Sigmoid colon (tissue), 7 donors: ENCODE measurements at regions of chr18 and their contacts with region 1.

Region 1: DNA sequence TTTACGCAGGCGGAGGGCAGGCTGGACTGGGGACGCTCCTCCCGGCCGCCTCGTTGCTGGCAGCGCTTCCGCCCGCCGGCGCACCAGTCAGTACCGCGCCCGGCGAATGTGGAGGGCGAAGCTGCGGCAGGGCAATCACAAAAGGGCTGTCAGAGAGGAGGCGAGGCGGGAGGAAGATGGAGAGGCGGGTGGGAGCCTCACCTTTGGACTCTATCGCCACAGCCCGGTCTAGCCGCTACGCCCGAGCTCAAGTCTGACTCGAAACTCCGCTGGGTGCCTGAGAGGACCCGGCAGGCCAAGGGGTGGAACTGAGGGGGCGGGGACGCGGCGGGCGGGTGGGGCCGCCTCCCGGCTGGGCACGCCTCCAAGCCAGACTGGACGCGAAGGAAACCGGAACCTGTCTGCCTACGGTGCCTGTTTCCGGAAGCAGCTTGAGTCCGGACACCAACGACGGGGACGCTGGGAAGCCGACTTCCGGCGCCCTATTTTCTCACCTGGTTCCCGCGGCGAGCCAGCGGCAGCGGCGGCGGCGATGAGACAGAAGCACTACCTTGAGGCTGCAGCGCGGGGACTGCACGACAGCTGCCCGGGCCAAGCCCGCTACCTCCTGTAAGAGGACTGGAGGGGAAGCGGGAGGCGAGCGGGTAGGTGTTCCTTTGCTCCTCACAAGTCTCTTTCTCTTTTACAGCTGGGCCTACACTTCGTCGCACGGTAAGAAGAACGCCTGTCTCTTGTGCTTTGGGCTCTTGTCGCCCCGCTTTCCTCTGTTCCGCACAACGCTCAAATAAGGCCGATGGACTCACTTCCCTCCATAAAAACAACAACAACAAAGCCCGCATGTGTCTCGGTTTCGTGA is at the start of gene RMP24:
- DNase-seq: peak; percentile 98
- H3K4me3 ChIP-seq: peak within 1 kb of the TSS; percentile 72 to 92 (median 88)
- H3K27ac ChIP-seq: peak within 1 kb of the TSS; percentile 91 to 93 (median 92)
- H3K4me1 ChIP-seq: peaks cover 0 to 26% (median 23%) of the 10 kb centered on the region in 4 donors
- H3K27me3 ChIP-seq: no peaks in the 10 kb centered on the region
- CTCF ChIP-seq: no peak
- EP300 ChIP-seq: peak in 1 of 4 donors; percentile 65
- POLR2A ChIP-seq: peak in 1 of 2 donors; percentile 50

Region 2: DNA sequence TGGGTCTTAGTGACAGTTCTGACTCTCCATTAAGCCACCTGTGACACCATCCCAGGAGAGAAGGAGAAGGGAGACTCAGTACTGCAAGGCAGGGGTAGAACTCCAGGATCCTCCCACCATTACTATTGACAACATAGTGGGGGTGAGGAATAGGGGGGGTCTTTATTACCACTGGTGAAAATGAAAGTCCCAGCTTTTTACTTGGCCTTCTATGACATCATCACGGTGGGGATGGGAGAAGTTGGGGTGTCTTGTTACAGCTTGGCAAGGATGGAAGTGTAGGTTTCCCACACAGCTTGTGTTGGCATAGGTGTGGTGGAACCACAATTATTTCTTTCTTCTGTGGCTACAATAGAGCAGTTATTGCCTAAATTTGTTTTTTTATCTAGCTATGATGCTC is 1466.2 kb before region 1 on chr18:
- intact Hi-C with region 1: no loop called
- DNase-seq: no peak
- H3K4me3 ChIP-seq: no peak overlapping the region
- H3K27ac ChIP-seq: no peak overlapping the region
- H3K4me1 ChIP-seq: no peaks in the 10 kb centered on the region
- H3K27me3 ChIP-seq: no peaks in the 10 kb centered on the region
- CTCF ChIP-seq: no peak
- EP300 ChIP-seq: no peak
- POLR2A ChIP-seq: no peak

Region 3: DNA sequence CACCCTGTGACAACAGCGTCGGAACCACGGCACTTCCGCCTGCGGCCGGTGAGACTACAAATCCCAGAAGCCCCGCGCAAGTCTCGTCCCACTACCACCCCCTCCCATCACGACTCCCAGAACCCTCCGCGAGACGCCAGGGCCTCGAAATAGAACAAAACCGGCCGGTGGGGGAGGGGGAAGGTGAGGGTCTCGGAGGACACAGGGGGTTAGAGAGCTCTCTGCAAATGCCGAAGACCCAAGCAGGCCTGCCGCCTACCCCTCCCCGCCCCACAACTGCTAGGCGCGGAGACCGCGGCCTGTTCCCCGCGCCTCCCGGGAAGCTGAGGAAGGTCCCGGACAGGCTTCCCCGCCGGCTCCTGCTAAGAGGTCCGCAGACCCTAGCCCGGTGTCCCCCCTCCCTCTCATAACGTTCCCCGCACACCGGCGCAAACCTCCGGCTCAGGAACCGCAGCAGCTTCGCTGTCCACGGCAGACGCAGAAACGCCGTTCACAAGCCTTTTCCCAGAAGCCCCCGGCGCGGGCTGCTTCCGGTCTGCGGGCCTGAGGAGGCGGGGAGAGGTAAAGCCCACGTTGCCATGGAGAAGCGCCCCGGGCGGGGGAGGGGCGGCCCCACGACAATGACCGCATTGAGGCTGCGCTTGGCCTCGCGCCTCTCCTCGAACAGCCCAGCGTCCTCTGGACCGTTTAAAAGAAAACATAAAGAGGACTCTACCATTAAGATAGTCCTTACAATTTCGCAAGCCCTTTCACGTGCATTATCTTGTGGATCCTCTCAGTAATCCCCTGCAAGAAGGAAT is 628.3 kb before region 1 on chr18 and contains the start of gene ZNF24:
- intact Hi-C with region 1: loop called (anchors 10 kb)
- DNase-seq: peak; percentile 98
- H3K4me3 ChIP-seq: peak within 1 kb of the TSS; percentile 77 to 96 (median 94)
- H3K27ac ChIP-seq: peak within 1 kb of the TSS; percentile 95 to 99 (median 99)
- H3K4me1 ChIP-seq: peaks cover 0 to 56% (median 28%) of the 10 kb centered on the region in 4 donors
- H3K27me3 ChIP-seq: no peaks in the 10 kb centered on the region
- CTCF ChIP-seq: no peak
- EP300 ChIP-seq: peak in 2 of 4 donors; percentile 23 to 49
- POLR2A ChIP-seq: peak; percentile 66 to 78
- total RNA-seq, gene ZNF24: 32.4 to 49.4 (median 42.9) TPM

Region 4: GRCh38 chr18:35497370-35498197 is 474.8 kb before region 1 on chr18 and contains the start of gene INO80C:
- intact Hi-C with region 1: loop called (anchors 2 kb)
- DNase-seq: peak; percentile 95
- H3K4me3 ChIP-seq: peak within 1 kb of the TSS; percentile 55 to 74 (median 63)
- H3K27ac ChIP-seq: peak within 1 kb of the TSS; percentile 87 to 95 (median 92)
- H3K4me1 ChIP-seq: peaks cover 4 to 39% (median 19%) of the 10 kb centered on the region in 4 donors
- H3K27me3 ChIP-seq: no peaks in the 10 kb centered on the region
- CTCF ChIP-seq: no peak
- EP300 ChIP-seq: no peak
- POLR2A ChIP-seq: peak; percentile 61 to 90
- total RNA-seq, gene INO80C: 3.7 to 25.5 (median 5.2) TPM

Region 5: GRCh38 chr18:36067055-36067957 is 94.9 kb after region 1 on chr18 and contains the start of gene RPRD1A:
- intact Hi-C with region 1: loop called (anchors 5 kb)
- DNase-seq: peak; percentile 98
- H3K4me3 ChIP-seq: peak within 1 kb of the TSS; percentile 66 to 94 (median 78)
- H3K27ac ChIP-seq: peak within 1 kb of the TSS; percentile 88 to 96 (median 93)
- H3K4me1 ChIP-seq: peaks cover 0 to 13% (median 9%) of the 10 kb centered on the region in 4 donors
- H3K27me3 ChIP-seq: no peaks in the 10 kb centered on the region
- CTCF ChIP-seq: no peak
- EP300 ChIP-seq: no peak
- POLR2A ChIP-seq: peak; percentile 37 to 50
- total RNA-seq, gene RPRD1A: 68.8 to 80.3 (median 71.8) TPM

Region 6: GRCh38 chr18:36095936-36096519 is 123.6 kb after region 1 on chr18:
- intact Hi-C with region 1: no loop called
- DNase-seq: no peak
- H3K4me3 ChIP-seq: no peak overlapping the region
- H3K27ac ChIP-seq: no peak overlapping the region
- H3K4me1 ChIP-seq: no peaks in the 10 kb centered on the region
- H3K27me3 ChIP-seq: peaks cover 0 to 4% (median 0%) of the 10 kb centered on the region in 3 donors
- CTCF ChIP-seq: peak; percentile 35 to 48 (median 42)
- EP300 ChIP-seq: no peak
- POLR2A ChIP-seq: no peak